ENCODE measurements at regions of chr18 and their contacts with region 1.

Region 1: GRCh38 chr18:3623769-3624545 is 174.0 kb downstream of the TGIF1 start:
- DNase-seq: peak; percentile 95
- ATAC-seq: peak; percentile 88
- H3K4me3 ChIP-seq: peak overlapping the region; percentile 2 to 26; a peak in 3 of 4 replicates
- H3K27ac ChIP-seq: peak overlapping the region; percentile 93
- H3K4me1 ChIP-seq: peaks cover 56% of the 10 kb centered on the region
- H3K27me3 ChIP-seq: no peaks in the 10 kb centered on the region
- CTCF ChIP-seq: no peak

Region 2: GRCh38 chr18:2180586-2180985 is 1443.4 kb before region 1 on chr18:
- CTCF ChIA-PET with region 1: no interaction called
- POLR2A ChIA-PET with region 1: no interaction called
- in situ Hi-C with region 1: no loop called
- intact Hi-C with region 1: no loop called
- DNase-seq: no peak
- ATAC-seq: no peak
- H3K4me3 ChIP-seq: no peak overlapping the region
- H3K27ac ChIP-seq: no peak overlapping the region
- H3K4me1 ChIP-seq: no peaks in the 10 kb centered on the region
- H3K27me3 ChIP-seq: no peaks in the 10 kb centered on the region
- CTCF ChIP-seq: no peak

Region 3: DNA sequence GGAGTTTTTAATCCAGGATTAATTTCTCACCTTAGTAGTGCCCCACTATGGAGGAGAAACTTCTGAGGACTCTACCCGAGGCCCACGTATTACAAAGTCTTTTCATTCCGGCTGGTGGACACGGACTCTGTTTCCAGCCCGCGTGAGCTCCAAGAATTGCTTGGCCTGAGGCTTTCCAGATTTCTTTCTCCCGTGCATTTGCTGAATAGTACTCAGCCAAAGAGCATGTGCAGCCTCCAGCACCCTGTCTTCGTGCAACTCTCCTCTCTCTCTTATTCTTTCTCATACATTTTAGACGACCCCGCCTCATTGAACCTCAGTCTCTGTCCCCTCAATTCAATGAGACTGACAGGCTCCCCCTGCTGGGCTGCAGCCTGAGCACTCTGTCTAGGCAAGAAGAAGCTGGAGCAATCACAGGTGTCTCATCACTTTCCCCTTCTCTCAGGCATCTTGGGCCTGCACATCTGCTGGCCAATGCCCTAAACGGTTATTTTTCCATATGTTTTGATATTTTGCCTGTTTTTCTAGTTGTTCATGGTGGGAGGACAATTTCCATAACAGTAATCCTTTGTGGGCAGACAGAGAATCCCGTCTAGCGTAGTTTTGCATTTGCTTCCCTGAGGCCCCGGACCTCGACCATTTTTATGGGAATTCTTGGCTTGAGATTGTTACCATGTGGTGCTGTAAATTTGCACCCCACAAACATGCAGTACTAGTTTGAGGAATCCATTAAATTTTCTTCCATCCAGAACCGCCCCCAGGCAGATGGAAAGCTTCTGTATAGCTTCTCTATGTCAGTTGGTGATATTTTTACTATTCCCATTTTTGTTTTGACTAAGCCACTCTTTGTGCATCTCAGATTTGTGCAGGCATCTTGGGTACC is 560.9 kb before region 1 on chr18:
- CTCF ChIA-PET with region 1: no interaction called
- POLR2A ChIA-PET with region 1: interaction called, 18 read pairs
- in situ Hi-C with region 1: no loop called
- intact Hi-C with region 1: no loop called
- DNase-seq: peak; percentile 8
- ATAC-seq: peak; percentile 82
- H3K4me3 ChIP-seq: 0 out of 4 replicates have a peak overlapping the region, but pooled peaks of 1 of the 2 experiments have one; percentile 15
- H3K27ac ChIP-seq: peak overlapping the region; percentile 67
- H3K4me1 ChIP-seq: peaks cover 37% of the 10 kb centered on the region
- H3K27me3 ChIP-seq: no peaks in the 10 kb centered on the region
- CTCF ChIP-seq: peak; percentile 92

Region 4: DNA sequence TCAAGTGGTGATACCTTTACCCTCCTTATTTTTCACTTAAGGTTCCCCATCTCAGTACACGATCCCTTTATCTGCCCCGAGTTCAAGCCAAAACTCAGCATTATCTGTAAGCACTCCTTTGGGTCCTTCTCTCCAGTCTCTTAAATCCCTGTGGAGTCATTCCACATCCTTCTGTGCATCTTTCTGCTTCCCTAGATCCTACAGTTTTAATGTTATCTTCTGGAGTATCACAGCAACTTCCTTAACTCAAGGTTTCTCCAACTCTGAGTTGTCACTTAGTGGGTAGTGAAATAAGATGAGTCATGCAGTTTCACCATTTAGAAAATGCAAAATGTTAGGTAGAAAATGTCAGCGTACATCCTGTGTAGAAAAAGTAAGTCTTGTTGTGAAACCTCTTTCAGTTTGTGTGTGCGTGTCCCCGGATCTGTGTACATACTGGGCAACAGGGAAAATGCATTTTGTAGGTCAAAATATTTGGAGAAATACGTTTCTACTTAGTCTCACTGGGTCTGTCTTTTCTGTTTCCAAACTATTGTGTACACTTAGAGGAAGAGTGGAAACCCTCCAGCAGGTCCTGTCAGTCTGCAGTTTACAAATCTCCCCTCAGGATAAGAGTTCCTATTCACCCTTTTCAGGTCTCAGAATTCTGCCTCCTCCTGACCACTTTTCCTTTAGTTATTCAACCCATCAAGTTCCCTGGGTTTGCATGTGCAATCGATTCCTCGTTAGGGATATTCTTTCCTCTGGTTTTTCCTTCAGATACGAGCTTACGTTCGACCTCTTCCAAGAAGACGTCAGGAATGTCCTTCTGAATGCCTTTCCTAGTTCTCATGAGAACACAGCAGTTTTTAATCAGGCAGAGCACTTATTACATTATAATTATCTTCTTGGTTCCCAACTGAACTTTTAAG is 19.2 kb before region 1 on chr18:
- CTCF ChIA-PET with region 1: no interaction called
- POLR2A ChIA-PET with region 1: interaction called, 17 read pairs
- in situ Hi-C with region 1: no loop called
- intact Hi-C with region 1: no loop called
- DNase-seq: peak; percentile 81
- ATAC-seq: peak; percentile 2; the same call in 1 of the 2 replicates
- H3K4me3 ChIP-seq: peak overlapping the region; percentile 57 to 72
- H3K27ac ChIP-seq: peak overlapping the region; percentile 100
- H3K4me1 ChIP-seq: peaks cover 51% of the 10 kb centered on the region
- H3K27me3 ChIP-seq: no peaks in the 10 kb centered on the region
- CTCF ChIP-seq: no peak

Region 5: DNA sequence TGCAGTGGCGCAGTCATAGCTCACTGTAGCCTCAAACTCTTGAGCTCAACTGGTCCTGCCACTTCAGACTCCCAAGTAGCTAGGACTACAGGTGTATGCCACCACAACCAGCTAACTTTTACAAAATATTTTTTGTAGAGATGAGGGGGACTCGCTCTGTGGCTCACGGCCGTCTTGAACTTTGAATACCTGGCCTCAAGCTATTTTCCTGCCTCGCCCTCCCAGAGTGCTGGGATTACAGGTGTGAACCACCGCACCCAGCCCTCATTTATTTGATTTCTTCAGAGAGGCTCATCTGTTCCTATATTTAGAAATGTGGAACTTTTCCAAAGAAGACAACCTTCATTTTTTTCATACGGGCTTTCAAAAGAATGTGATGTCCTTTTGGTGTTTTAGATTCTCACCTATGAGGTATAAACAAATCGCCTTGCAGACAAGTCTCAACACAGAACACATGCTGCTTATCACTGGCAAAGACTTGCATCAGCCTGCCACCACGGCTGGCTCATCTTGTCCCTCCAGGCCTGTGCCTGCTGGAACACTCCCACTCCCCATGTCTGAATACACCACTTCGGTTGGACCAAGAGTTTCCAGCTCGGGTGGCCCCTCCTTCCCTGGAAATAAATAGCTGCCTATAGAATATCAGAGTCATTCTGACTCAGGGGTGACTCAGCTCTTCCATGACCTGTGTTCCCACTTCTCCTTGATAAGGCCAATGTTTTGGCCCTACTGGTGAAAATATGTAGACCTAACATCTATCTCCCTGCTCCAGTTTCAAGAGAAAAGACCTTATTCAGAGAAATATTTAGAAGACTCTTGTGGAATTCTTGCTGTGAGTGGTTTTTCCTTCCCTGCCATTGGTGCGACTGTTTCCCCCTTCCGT is 28.7 kb after region 1 on chr18:
- CTCF ChIA-PET with region 1: no interaction called
- POLR2A ChIA-PET with region 1: interaction called, 13 read pairs
- in situ Hi-C with region 1: no loop called
- intact Hi-C with region 1: no loop called
- DNase-seq: peak; percentile 97
- ATAC-seq: peak; percentile 87
- H3K4me3 ChIP-seq: peak overlapping the region; percentile 43 to 53
- H3K27ac ChIP-seq: peak overlapping the region; percentile 100
- H3K4me1 ChIP-seq: peaks cover 76% of the 10 kb centered on the region
- H3K27me3 ChIP-seq: no peaks in the 10 kb centered on the region
- CTCF ChIP-seq: no peak

Region 6: DNA sequence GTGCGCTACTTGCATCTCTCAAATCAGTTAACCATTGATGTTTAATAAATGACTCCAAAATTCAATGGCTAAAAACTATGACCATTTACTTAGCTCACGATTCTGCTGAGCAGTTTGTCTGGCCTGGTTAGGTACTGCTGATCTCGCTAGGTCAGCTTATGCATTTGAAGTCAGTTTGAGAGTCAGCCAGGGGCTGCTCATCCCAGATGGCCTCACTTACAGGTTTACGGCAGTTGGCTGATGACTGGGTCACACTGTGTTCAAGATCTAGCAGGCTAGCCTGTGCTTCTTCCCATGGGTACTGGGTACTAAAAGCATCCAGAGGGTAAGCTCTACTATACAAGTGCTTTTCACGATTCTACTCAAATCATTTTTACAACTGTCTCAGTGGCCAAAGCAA is 709.1 kb after region 1 on chr18:
- CTCF ChIA-PET with region 1: no interaction called
- POLR2A ChIA-PET with region 1: no interaction called
- in situ Hi-C with region 1: no loop called
- intact Hi-C with region 1: no loop called
- DNase-seq: no peak
- ATAC-seq: no peak
- H3K4me3 ChIP-seq: no peak overlapping the region
- H3K27ac ChIP-seq: no peak overlapping the region
- H3K4me1 ChIP-seq: no peaks in the 10 kb centered on the region
- H3K27me3 ChIP-seq: no peaks in the 10 kb centered on the region
- CTCF ChIP-seq: no peak